ENCODE measurements at regions of chr14 and their contacts with region 1.

Region 1: DNA sequence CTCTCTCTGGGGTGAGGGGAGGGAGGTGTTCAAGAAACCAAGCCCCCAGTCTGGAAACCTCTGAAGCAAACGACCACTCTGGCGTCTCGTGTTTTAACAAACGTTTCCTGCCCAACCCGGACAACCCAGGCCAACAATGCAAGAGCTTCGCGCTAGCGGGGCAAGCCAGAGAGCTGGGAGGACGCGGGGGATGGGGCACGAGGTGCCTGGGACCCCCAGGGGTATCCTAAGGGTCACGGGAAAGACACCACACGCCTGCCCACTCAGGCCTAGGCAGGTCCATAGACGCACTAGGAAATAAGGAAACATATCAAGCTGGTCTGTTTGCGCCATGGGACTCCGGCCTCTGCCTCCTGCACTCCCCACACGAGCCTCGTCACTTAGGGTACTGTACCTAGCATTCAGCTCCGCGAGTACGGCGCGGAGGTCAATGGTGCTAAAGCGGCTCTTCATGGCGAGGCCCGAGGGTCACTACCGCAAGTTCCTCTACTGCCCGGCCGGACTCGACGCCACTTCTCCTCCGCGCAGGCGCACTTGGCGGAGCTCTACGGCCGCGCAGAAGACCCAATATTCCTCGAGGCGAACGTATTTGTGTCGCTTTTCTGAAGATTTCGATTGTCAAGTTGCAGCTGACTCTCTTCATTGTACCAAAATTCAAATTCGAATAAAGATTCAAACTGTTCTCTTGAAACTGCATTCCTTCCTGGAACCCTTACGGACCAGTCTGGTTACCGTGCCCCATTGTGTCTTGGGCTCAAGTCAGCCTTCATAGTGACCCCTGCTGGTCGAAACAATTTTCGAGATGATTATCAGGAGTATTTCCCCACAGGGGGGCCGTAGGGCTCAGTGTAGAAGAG is at the start of gene NEMF:
- DNase-seq: peak; percentile 92
- H3K4me3 Mint-ChIP-seq: peak within 1 kb of the TSS; percentile 99
- H3K27ac Mint-ChIP-seq: peak within 1 kb of the TSS; percentile 99
- H3K4me1 Mint-ChIP-seq: peaks cover 15% of the 10 kb centered on the region
- H3K27me3 Mint-ChIP-seq: no peaks in the 10 kb centered on the region
- CTCF ChIP-seq: peak; percentile 88
- total RNA-seq, gene NEMF: 55.0 and 57.7 TPM in 2 replicates

Region 2: GRCh38 chr14:49633640-49634546 is 218.6 kb before region 1 on chr14:
- CTCF ChIA-PET with region 1: interaction called, 6 read pairs
- POLR2A ChIA-PET with region 1: interaction called, 22 read pairs
- intact Hi-C with region 1: no loop called
- DNase-seq: peak; percentile 92
- H3K4me3 Mint-ChIP-seq: peak overlapping the region; percentile 95
- H3K27ac Mint-ChIP-seq: peak overlapping the region; percentile 99
- H3K4me1 Mint-ChIP-seq: peaks cover 14% of the 10 kb centered on the region
- H3K27me3 Mint-ChIP-seq: no peaks in the 10 kb centered on the region
- CTCF ChIP-seq: peak; percentile 83

Region 3: DNA sequence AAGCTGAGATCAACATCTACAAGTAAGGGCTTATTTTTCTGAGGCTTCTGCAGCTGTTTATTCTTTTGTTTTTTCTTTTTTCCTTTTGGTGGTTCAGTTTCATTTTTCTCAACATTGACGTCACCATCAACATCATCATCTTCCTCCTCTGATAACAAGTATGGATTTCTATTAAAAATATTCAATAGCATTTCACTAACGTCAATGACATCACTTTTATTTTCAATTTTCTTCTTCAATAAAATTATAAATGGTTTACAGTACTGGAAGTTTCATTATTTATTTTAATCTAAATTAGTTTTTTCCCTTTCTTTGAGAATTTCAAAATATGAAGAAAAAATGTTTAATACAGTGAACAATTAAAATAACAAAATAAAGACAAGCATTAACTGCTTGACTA is 23.9 kb before region 1 on chr14:
- CTCF ChIA-PET with region 1: interaction called, 9 read pairs
- POLR2A ChIA-PET with region 1: interaction called, 11 read pairs
- intact Hi-C with region 1: no loop called
- DNase-seq: no peak
- H3K4me3 Mint-ChIP-seq: no peak overlapping the region
- H3K27ac Mint-ChIP-seq: no peak overlapping the region
- H3K4me1 Mint-ChIP-seq: no peaks in the 10 kb centered on the region
- H3K27me3 Mint-ChIP-seq: no peaks in the 10 kb centered on the region
- CTCF ChIP-seq: no peak

Region 4: DNA sequence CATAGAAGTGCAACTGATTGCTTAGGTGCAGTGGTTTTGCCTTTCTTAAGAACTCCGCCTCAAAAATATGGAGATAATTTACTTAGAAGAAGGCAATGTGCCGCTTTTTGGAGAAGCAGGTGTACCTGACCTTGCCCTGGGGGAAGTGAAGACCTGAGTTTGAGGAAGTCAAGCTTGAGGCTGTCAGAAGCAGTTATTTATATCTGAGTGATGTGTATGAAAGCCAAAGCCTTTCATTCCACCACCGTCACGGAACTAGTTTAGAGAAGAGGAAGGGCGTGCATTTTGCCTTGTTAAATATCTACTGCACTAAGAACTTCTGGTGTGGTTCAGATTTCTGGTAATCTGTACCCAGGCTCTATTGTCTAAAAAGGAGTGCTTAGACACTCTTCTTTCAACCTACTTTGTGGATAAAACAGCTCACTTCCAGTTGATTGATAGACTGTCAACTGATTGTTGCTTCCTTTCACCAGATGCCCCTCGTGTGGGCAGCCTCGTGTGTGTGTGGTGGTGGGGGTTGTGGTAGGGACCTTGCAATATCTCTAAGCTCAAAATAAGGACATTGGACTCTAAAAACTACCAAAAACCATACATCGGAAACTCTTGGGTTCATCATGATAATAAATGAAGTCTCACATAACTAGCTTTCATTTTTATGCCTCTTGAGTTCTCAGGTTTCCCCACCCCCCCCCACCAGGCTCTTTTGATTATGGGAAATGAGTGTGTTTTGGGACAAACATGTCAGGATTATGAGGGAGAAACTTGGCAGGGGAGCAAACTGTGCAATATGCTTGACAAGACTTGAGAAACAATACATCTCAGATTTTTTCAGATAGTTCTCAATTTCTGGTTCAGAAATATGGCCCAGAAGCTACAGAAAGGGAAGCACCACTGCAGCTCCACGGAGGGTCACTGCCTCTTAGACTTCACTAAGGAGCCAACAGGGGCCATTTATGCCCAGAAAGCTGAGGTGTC is 118.9 kb after region 1 on chr14:
- CTCF ChIA-PET with region 1: interaction called, 11 read pairs
- POLR2A ChIA-PET with region 1: interaction called, 15 read pairs
- intact Hi-C with region 1: no loop called
- DNase-seq: peak; percentile 80
- H3K4me3 Mint-ChIP-seq: peak overlapping the region; percentile 58
- H3K27ac Mint-ChIP-seq: peak overlapping the region; percentile 89
- H3K4me1 Mint-ChIP-seq: peaks cover 48% of the 10 kb centered on the region
- H3K27me3 Mint-ChIP-seq: no peaks in the 10 kb centered on the region
- CTCF ChIP-seq: no peak

Region 5: DNA sequence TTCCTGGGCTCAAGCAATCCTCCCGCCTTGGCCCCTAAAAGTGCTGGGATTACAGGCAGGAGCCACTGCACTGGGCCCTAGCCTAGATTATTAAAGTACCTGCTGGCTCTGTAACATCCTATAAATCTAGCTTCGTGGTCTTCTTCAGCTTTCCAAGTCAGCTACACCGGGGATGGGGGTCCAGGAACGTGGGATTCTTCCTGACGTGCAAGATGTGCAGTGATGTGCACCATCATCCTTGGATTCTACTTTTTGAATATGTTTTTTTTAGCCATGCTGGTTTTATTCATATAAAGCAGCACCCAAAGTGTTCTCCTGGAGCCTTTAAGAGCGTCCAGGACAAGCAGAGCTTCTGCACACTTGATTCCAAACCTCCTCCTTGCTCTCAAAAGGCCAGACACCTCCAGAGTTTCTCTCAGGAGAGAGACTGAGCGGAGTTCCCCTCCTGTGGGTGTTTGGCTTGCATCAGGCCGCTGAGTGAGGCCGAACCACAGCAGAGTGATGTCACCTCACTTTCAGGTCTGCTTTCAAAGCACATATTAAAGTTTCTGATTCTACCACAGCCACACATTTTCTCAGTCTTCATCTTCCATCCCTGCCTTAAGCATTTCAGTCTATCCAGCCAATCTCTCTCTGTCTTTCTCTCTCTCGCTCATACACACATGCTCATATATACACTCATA is 230.4 kb after region 1 on chr14:
- CTCF ChIA-PET with region 1: interaction called, 5 read pairs
- POLR2A ChIA-PET with region 1: interaction called, 12 read pairs
- intact Hi-C with region 1: no loop called
- DNase-seq: no peak
- H3K4me3 Mint-ChIP-seq: no peak overlapping the region
- H3K27ac Mint-ChIP-seq: no peak overlapping the region
- H3K4me1 Mint-ChIP-seq: peaks cover 26% of the 10 kb centered on the region
- H3K27me3 Mint-ChIP-seq: no peaks in the 10 kb centered on the region
- CTCF ChIP-seq: no peak

Region 6: DNA sequence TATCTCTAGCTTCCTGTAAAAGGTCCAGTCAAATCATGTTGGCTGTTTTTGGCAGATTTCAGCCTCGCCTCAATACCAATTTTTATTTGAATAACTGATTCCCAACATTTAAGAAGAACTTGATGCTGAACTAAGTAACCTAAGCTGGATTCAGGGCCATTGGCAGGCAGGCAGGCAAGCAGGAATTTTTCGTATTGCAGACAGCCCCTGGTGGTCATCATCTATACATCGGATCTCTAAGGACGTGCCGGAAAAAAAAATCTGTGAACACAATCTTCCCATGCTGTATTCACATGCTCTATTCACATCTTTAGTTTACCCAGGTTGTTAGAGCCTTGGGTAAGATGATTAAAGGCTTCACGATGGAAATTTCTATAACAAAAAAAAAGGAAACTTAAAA is 256.8 kb after region 1 on chr14:
- CTCF ChIA-PET with region 1: interaction called, 178 read pairs
- POLR2A ChIA-PET with region 1: interaction called, 11 read pairs
- intact Hi-C with region 1: loop called (anchors 2 kb)
- DNase-seq: no peak
- H3K4me3 Mint-ChIP-seq: no peak overlapping the region
- H3K27ac Mint-ChIP-seq: no peak overlapping the region
- H3K4me1 Mint-ChIP-seq: no peaks in the 10 kb centered on the region
- H3K27me3 Mint-ChIP-seq: no peaks in the 10 kb centered on the region
- CTCF ChIP-seq: peak; percentile 14

Region 7: DNA sequence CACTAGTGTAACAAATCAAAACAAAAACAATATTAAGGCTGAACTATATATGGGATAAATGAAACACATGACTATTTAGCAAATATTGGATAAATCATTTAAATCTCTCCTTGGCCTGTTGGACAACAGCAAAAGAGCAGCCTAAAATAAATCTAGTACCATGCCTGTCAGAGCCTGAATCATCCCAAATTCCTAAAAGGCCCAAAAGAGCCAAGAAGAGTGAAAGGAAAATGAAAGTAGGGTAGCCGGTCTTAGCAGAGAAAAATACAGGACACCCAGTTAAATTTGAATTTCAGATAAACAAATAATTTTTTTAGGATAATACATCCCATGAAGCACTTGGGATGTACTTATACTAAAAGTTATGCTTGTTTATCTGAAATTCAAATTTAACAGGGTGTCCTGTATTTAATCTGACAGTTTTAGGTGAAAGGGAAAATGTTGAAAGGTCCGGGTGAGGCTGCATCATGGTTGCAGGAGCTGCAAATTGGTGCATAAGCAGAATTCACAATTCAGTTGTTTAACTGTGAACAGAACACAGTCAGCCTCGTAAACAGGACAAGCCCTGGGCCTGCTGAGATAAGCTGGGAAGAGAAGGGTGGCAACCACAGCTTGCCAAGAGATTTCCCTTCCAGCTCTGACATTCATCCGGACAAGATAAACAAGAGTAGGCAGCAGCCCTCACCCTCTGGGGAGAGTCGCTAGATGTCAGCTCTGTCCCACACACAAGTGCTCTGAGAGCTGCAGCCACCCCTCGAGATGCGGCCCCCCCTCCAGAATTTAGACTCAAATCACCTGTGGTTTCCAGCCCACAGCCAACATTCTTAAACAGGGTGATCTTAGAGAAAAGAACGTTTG is 489.9 kb after region 1 on chr14:
- CTCF ChIA-PET with region 1: no interaction called
- POLR2A ChIA-PET with region 1: no interaction called
- intact Hi-C with region 1: no loop called
- DNase-seq: peak; percentile 30
- H3K4me3 Mint-ChIP-seq: no peak overlapping the region
- H3K27ac Mint-ChIP-seq: peak overlapping the region; percentile 66
- H3K4me1 Mint-ChIP-seq: peaks cover 18% of the 10 kb centered on the region
- H3K27me3 Mint-ChIP-seq: no peaks in the 10 kb centered on the region
- CTCF ChIP-seq: peak; percentile 16